ENCODE measurements at regions of chr18 and their contacts with region 1.

Region 1: DNA sequence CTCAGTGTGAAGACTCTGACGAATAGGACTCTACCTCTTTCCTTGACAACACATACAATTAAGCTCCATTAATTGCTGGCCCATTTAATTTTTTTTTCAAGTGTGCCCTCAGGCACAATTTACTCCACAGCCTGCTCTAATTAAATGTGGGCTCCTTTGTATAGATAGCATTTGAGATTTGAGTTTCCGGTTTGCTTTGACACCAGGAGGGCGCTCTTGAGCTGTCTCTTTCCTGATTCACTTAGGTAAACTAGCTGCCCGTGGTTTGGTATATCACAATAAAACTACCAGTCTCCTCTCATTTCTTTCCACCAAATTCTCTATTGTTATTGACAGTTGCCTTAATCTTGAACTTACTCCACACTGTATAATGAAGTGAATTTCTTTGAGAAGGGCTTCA is 666.0 kb downstream of the DSC3 start:
- DNase-seq: peak; percentile 13
- H3K4me3 Mint-ChIP-seq: no peak overlapping the region
- H3K27ac Mint-ChIP-seq: no peak overlapping the region
- H3K4me1 Mint-ChIP-seq: no peaks in the 10 kb centered on the region
- H3K27me3 Mint-ChIP-seq: no peaks in the 10 kb centered on the region
- CTCF ChIP-seq: no peak

Region 2: GRCh38 chr18:30106356-30106755 is 270.2 kb before region 1 on chr18:
- CTCF ChIA-PET with region 1: no interaction called
- intact Hi-C with region 1: no loop called
- DNase-seq: peak; percentile 33
- H3K4me3 Mint-ChIP-seq: no peak overlapping the region
- H3K27ac Mint-ChIP-seq: no peak overlapping the region
- H3K4me1 Mint-ChIP-seq: peaks cover 7% of the 10 kb centered on the region
- H3K27me3 Mint-ChIP-seq: no peaks in the 10 kb centered on the region
- CTCF ChIP-seq: no peak

Region 3: DNA sequence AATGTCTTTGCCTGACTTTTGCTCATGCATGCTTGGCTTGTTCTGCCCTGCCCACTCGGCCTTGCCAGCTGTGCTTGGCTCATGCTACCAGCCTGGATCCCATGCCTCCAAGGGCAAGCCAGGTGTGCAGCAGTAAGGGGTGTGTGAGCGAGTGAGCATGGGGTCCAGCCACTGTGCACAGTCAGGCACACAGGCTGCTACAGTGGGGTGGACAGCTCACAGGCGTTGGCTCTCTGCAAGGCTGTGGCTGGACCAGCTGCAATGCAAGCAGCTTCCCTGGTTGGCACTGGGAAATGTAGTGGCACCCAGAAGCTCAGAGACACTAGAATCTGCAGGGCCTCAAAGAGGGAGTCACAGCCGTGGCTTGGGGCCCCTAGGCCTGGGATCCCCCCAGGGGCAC is 136.4 kb after region 1 on chr18:
- CTCF ChIA-PET with region 1: no interaction called
- intact Hi-C with region 1: no loop called
- DNase-seq: no peak
- H3K4me3 Mint-ChIP-seq: no peak overlapping the region
- H3K27ac Mint-ChIP-seq: no peak overlapping the region
- H3K4me1 Mint-ChIP-seq: no peaks in the 10 kb centered on the region
- H3K27me3 Mint-ChIP-seq: no peaks in the 10 kb centered on the region
- CTCF ChIP-seq: no peak

Region 4: GRCh38 chr18:30889519-30890301 is 513.2 kb after region 1 on chr18:
- CTCF ChIA-PET with region 1: interaction called, 10 read pairs
- intact Hi-C with region 1: loop called (anchors 10 kb)
- DNase-seq: peak; percentile 23
- H3K4me3 Mint-ChIP-seq: no peak overlapping the region
- H3K27ac Mint-ChIP-seq: no peak overlapping the region
- H3K4me1 Mint-ChIP-seq: no peaks in the 10 kb centered on the region
- H3K27me3 Mint-ChIP-seq: no peaks in the 10 kb centered on the region
- CTCF ChIP-seq: peak; percentile 37

Measured in Calu3 (cell line).